Right ventricle myocardium superior (tissue), 1 donor: ENCODE measurements at regions of chr5 and their contacts with region 1.

Region 1: DNA sequence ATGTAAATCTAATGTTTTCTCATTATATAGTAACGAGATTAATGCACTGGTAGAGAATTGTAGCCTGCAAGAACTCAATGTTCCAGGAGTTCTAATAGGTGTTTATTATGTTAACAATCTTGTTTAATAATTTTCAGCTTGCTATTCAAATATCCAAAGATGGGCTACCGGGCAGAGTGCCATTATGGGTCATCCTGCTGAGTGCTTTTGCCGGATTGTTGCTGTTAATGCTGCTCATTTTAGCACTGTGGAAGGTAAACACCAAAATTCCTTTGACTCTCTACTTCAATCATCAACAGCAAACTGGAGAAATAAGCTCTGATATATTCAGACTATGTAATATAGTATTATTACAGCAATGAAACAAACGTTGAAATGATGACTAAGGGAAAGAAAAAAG is 41.9 kb upstream of the ITGA2 start:
- DNase-seq: no peak
- ATAC-seq: no peak

Region 2: DNA sequence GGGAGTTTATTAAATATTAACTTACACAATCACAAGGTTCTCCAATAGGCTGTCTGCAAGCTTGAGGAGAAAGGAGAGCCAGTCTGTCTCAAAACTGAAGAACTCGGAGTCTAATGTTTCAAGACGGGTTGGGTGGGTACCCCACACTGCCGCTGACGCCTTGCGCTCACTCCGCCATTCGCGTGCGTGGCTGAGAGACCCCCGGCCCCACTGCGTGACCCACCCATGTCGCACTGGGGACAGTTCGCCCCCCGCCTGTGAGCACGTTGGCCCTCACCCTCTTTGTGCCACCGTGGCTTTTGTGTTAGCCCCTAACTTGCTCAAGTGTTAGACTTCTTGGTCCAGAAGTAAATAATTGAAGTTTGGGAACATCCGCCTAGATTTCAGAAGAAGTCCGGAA is 429.5 kb before region 1 on chr5:
- intact Hi-C with region 1: no loop called
- DNase-seq: no peak
- ATAC-seq: no peak

Region 3: GRCh38 chr5:52577546-52577945 is 369.7 kb before region 1 on chr5:
- intact Hi-C with region 1: no loop called
- DNase-seq: no peak
- ATAC-seq: no peak

Region 4: DNA sequence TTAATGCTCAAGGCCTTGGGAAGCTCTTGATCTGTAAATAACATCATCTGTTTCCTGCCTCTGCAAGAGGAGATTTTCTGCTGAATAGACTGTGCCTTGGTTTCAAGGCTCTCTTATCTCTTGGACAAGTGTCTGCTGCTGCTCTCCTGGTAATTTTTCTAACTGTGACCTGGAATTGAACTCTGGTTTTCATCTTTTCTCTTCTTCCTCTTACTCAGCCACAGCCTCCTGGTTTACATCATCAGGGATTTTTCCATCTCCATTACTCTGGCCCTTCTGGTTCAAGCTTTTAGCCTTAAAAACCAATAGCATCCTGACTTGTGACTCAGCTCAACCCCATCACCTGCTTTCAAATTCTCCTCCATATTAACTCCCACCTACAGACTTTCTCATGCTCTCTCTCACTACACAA is 209.1 kb before region 1 on chr5:
- intact Hi-C with region 1: no loop called
- DNase-seq: no peak
- ATAC-seq: no peak

Region 5: DNA sequence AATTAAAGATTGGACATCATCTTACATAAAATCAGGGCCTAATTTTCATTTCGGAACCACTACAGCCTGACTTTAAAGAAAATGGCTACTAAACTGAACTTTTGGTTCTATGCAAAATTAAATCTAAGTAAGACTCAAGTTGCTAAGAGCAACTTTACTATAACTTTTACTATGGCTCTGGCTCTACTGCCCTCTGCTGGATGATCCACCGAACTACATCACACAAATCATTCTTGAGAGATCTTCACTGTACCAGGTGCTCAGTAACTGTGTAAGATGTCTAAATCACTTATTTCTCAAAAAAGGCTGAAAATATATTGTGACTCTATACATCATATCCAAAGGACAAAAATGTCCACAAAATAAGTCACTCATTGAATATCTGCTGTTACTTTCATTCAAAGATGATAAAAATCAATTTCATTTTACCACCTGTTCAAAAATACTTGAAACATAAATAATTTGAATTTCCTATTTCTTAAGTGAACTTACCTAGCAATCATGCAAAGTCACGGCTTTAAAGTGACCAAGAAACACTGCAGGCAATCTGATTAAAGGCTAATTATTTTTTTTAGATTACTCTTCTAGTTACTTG is 148.8 kb after region 1 on chr5:
- intact Hi-C with region 1: loop called (anchors 2 kb)
- DNase-seq: no peak
- ATAC-seq: peak; percentile 71